Dorsolateral prefrontal cortex (tissue), 120 donors: ENCODE measurements at regions of chr19 and their contacts with region 1.

Region 1: DNA sequence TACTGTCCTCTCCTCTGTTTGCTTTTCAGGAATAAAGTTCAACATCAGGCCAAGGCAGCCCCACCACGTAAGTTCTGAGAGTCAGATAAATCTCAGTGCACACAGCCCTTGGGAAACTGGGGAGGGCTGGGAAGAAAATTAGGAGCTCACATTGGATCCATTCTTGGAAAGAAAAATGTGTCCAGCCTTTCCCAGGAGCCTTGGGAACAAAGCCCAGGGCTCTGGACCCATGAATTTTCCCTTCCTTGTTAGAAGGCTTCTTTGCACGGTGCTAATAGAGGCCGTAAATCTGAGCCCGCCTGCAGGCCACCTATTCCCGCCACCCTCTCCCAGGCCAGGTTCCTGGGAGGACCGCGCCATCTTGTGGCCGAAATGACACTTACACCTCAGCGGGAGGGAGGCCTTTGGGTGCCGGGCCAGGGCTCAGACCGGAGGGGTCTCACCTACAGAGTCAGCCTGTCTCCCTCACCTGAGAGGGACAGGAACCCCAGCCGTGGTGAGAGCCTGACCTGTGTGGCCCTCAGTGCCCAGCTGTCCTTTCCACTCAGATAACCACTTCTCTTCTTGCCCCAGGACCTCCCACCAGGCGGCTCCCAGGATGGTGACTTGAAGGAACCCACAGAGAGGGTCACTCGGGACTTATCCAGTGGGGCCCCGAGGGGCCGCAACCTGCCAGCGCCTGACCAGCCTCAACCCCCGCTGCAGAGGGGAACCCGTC is 25.1 kb upstream of the KCTD15 start:
- DNase-seq: peak in 9 of 10 donors; percentile 60 to 85 (median 69)
- H3K4me3 ChIP-seq: no peak overlapping the region
- H3K27ac ChIP-seq: no peak overlapping the region
- H3K27me3 ChIP-seq: peaks cover 0 to 10% (median 0%) of the 10 kb centered on the region in 45 donors
- CTCF ChIP-seq: peak; percentile 70 to 97 (median 94)

Region 2: GRCh38 chr19:33241530-33242101 is 529.9 kb before region 1 on chr19:
- intact Hi-C with region 1: loop called (anchors 2 to 5 kb)
- DNase-seq: no peak
- H3K4me3 ChIP-seq: peak overlapping the region in 6 of 59 donors; percentile 2 to 23 (median 12)
- H3K27ac ChIP-seq: no peak overlapping the region
- H3K27me3 ChIP-seq: no peaks in the 10 kb centered on the region
- CTCF ChIP-seq: peak; percentile 38 to 86 (median 71)

Region 3: DNA sequence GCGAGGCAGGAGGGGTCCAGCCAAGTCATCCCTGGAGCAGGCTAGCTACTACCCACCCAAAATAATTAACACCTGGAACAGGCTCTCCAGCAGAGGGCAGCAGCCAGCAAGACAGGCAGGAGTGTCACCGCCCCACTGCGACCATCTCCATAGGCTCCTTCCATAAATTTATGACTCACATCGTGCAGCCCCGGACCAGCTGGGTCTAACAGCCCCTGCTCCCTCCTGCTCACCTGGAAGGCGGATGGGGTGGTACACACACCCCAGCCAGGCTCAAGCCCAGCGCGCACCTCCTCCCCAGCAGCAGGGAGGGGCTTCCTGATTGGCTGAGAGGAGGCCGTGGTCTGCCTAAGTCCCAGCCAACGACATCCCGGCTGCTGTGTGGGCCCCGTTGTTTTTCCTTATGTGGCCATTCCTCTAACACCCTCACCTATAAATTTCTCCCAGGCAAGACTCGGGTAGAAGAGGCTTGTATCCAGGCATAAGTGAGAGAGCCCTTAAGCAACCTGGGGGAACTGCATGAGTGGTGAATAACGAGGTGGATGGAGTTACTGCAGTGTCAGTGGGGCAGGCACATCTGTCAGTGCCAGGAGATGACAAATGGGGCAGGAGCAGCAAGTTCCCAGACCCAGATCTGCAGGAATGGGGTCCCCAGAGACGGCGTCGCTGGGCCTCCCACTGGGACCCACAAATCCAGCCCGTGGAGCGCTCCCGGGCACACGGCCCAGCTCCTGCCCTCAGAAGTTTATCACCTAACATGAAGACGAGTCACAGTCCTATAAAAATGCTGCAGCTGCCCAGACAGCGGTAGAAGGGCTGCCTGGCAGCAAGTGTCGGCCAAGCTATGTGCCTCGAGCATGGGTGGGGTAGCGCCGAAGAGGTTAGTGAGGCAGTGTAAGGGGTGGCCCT is 355.0 kb before region 1 on chr19:
- intact Hi-C with region 1: loop called in 1 of 2 experiments (anchors 5 kb)
- DNase-seq: peak in 5 of 10 donors; percentile 65 to 74 (median 67)
- H3K4me3 ChIP-seq: peak overlapping the region in 12 of 59 donors; percentile 5 to 46 (median 20)
- H3K27ac ChIP-seq: peak overlapping the region in 17 of 59 donors; percentile 5 to 61 (median 41)
- H3K27me3 ChIP-seq: no peaks in the 10 kb centered on the region
- CTCF ChIP-seq: peak; percentile 10 to 70 (median 57)

Region 4: GRCh38 chr19:33430674-33431277 is 340.8 kb before region 1 on chr19:
- intact Hi-C with region 1: loop called (anchors 1 to 5 kb)
- DNase-seq: peak; percentile 74 to 84 (median 76)
- H3K4me3 ChIP-seq: peak overlapping the region in 5 of 59 donors; percentile 3 to 19 (median 9)
- H3K27ac ChIP-seq: peak overlapping the region in 18 of 59 donors; percentile 9 to 69 (median 38)
- H3K27me3 ChIP-seq: no peaks in the 10 kb centered on the region
- CTCF ChIP-seq: peak; percentile 35 to 91 (median 82)

Region 5: DNA sequence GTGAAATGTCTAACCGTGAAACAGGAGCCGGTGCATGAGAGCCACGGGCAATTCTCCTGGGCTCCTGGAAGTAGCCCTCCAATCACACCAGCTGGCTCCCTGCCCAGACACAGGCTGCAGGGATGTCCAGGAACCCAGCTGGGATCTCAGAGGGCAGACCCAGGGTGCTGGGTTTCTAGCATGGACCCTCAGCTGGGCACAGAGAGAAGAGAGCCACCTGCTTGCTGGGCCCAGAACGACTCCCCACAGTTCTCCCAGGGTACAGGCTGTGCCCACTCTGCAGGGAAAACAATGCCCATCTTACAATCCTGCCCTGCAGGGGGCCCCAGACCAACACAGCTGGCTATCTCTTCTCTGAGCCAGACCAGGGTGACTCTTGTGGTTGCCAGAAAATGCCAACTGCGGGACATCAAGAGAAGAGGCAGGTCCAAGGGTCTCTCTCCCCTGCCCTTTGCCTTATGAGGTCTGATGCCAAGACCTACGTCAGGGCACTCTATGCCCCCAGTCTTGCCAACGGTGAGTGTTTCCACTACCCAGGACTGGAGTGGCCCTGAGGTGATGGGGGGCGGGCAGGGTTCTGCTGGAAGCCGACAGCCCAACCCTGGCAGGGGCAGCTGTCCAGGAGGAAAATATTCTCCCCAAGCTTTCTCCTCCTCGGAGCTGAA is 333.4 kb before region 1 on chr19:
- intact Hi-C with region 1: loop called in 1 of 2 experiments (anchors 5 kb)
- DNase-seq: peak in 8 of 10 donors; percentile 48 to 73 (median 70)
- H3K4me3 ChIP-seq: no peak overlapping the region
- H3K27ac ChIP-seq: peak overlapping the region in 4 of 59 donors; percentile 8 to 45 (median 39)
- H3K27me3 ChIP-seq: no peaks in the 10 kb centered on the region
- CTCF ChIP-seq: peak in 51 of 56 donors; percentile 13 to 66 (median 43)